Lower leg skin (tissue), 4 donors: ENCODE measurements at regions of chr15 and their contacts with region 1.

Region 1: DNA sequence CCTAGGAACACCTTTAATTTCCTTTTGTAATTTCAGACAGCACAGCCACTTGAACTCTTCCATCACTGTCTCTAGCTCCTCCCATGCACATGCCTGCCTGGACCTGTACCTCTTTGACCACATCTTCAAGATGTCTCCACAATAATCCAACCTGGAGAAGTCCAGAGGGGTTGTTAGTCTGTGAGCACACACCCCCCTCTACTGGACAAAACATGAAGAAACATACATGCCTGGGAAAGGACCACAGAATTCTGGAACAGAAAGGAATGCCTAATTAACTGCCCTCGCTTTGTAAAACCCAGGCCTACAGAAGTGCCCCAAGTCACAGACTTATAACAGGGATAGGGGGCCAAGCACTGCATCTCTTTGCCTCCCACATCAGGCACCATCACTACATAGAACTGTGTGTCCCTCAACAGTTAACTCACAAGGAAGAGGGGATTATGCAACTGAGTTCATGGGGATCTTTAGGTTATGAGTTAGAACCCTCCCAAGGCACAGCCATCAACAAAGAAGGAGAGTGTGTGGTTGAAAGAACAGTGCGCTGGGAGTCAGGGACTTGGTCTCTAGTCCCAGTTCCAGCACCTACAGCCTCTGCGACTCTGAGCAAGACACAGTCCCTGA is 61.7 kb downstream of the FMN1 start:
- DNase-seq: no peak
- H3K4me3 ChIP-seq: no peak overlapping the region
- CTCF ChIP-seq: no peak
- POLR2A ChIP-seq: no peak

Region 2: GRCh38 chr15:32651229-32651837 is 481.5 kb before region 1 on chr15:
- intact Hi-C with region 1: loop called (anchors 10 kb)
- DNase-seq: no peak
- H3K4me3 ChIP-seq: no peak overlapping the region
- CTCF ChIP-seq: no peak
- POLR2A ChIP-seq: no peak